OCI-LY7 (cell line): ENCODE measurements at regions of chr2 and their contacts with region 1.

Region 1: GRCh38 chr2:208175069-208175839 is 11.9 kb upstream of the CRYGA start:
- DNase-seq: peak; percentile 66
- H3K4me3 ChIP-seq: no peak overlapping the region
- H3K27ac ChIP-seq: no peak overlapping the region
- H3K4me1 ChIP-seq: no peaks in the 10 kb centered on the region
- CTCF ChIP-seq: peak; percentile 91

Region 2: DNA sequence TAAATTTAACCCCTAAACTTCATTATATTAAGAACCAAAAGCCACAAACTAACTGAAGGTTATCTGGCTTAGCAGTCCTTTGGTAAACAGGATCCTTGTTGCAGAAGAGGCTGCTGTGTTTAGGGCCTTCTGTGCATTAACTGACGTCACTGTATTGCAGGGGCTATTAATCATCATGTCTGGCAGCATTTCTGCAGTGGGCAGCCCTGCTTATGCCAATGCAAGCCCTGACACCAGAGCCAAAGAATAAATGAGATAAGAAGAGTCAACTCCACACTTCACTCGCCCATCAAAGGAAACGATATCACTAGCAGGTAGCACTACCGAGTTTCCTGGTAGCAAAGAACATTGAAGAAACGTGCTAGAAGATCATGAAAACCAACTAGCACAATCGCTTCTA is 260.5 kb before region 1 on chr2:
- CTCF ChIA-PET with region 1: no interaction called
- POLR2A ChIA-PET with region 1: no interaction called
- intact Hi-C with region 1: no loop called
- DNase-seq: no peak
- H3K4me3 ChIP-seq: no peak overlapping the region
- H3K27ac ChIP-seq: no peak overlapping the region
- H3K4me1 ChIP-seq: no peaks in the 10 kb centered on the region
- CTCF ChIP-seq: no peak

Region 3: GRCh38 chr2:208254871-208255556 is 79.8 kb after region 1 on chr2 and contains the start of gene IDH1:
- CTCF ChIA-PET with region 1: no interaction called
- POLR2A ChIA-PET with region 1: interaction called, 5 read pairs
- intact Hi-C with region 1: loop called (anchors 1 kb)
- DNase-seq: peak; percentile 91
- H3K4me3 ChIP-seq: peak within 1 kb of the TSS; percentile 77
- H3K27ac ChIP-seq: peak within 1 kb of the TSS; percentile 65
- H3K4me1 ChIP-seq: peaks cover 38% of the 10 kb centered on the region
- CTCF ChIP-seq: peak; percentile 81
- total RNA-seq, gene IDH1: 28.2 and 36.2 TPM in 2 replicates

Region 4: DNA sequence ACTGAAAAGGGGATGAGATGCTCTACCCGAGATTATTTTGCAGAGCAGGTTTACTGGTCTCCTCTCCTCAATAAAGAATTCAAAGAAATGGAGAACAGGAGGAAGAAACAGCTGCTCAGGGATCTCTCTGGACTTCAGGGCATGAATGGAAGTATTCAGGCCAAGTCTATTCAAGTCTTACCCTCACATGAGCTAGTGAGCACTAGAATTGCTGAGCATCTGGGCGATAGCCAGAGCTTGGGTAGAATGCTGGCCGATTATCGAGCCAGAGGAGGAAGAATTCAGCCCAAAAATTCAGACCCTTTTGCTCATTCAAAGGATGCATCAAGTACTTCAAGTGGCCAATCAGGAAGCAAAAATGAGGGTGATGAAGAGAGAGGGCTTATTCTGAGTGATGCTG is 150.8 kb after region 1 on chr2:
- CTCF ChIA-PET with region 1: no interaction called
- POLR2A ChIA-PET with region 1: no interaction called
- intact Hi-C with region 1: no loop called
- DNase-seq: no peak
- H3K4me3 ChIP-seq: no peak overlapping the region
- H3K27ac ChIP-seq: no peak overlapping the region
- H3K4me1 ChIP-seq: no peaks in the 10 kb centered on the region
- CTCF ChIP-seq: no peak

Region 5: DNA sequence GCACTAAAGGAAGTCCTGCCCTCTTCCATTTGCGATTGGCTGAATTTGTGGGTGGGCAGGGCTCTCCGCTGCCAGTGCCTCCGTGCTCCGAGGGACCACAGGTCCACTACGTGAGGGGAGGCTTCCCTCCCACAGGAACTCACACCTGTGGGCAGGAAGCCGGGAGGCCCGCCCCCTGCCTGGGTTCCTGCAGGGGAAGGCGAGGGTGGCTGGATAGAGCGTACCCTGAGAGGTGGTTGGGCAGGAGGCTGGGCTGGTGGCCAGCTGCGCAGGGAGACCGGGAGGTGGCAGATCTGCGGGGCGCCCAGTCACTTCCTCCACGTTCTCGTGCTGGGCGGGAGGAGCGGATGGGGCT is 184.4 kb after region 1 on chr2:
- CTCF ChIA-PET with region 1: no interaction called
- POLR2A ChIA-PET with region 1: no interaction called
- intact Hi-C with region 1: loop called (anchors 10 kb)
- DNase-seq: no peak
- H3K4me3 ChIP-seq: no peak overlapping the region
- H3K27ac ChIP-seq: no peak overlapping the region
- H3K4me1 ChIP-seq: no peaks in the 10 kb centered on the region
- CTCF ChIP-seq: no peak